CD14-positive monocyte (primary cell): ENCODE measurements at regions of chr12 and their contacts with region 1.

Region 1: DNA sequence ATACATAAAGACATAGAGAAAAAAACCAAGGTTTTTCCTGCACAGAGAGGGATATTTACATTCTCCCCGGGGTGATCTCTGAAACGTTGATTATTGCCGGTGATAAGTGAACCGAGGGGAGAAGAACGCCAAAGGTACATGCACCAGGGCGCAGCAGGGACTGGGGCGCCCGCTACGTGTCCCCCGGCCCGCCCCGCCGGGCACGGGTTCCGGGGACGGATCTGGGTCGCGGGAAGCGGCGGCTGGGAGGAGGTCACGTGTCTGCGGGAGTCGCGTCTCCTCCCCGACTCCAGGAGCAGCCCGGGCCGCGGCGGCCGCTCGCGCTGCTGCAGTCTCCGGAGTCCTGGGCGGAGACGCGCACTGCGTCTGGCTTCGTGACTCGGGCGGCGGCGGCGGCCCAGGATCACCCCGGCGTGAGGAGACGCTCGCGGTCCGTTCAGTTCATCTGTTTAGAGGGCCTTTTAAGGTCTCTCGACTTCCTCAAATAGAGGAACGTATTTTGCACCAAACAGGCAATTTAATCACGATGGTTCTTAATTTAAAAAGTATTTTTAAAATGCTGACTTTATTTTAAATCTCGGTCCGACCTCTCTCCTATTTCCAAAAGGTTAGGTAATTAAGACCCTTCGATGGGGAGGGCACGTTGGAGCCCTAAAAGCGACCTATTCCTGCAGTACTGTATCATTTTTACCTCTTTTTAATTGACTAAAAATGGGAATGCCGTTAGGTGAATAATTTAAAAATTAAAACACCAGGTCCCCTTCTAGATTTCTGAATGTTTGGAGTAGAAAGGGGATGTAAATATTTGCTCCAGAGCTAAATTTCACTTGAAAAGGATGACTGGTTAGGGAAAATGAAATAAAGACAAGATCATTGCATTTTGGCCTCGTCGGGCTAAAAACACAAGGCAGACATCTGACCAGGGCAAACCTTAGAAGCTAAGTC is 1.8 kb upstream of the BHLHE41 start:
- DNase-seq: peak; percentile 52 to 57 (median 53)
- H3K4me3 ChIP-seq: peak overlapping the region; percentile 19 to 75 (median 35)
- H3K4me3 Mint-ChIP-seq: peak overlapping the region; percentile 86 to 97
- H3K27ac ChIP-seq: no peak overlapping the region
- H3K27ac Mint-ChIP-seq: no peak overlapping the region
- H3K4me1 ChIP-seq: peaks cover 49 to 59% of the 10 kb centered on the region in 2 donors
- H3K4me1 Mint-ChIP-seq: peaks cover 51% of the 10 kb centered on the region
- H3K27me3 ChIP-seq: peaks cover 64 to 67% of the 10 kb centered on the region in 2 donors
- H3K27me3 Mint-ChIP-seq: peaks cover 69 to 78% (median 73%) of the 10 kb centered on the region in 3 donors
- CTCF ChIP-seq: no peak

Region 2: GRCh38 chr12:26195641-26196420 is 69.2 kb after region 1 on chr12:
- intact Hi-C with region 1: no loop called
- DNase-seq: peak; percentile 0 to 36 (median 1)
- H3K4me3 ChIP-seq: peak overlapping the region; percentile 14 to 71 (median 31)
- H3K4me3 Mint-ChIP-seq: peak overlapping the region; percentile 84 to 96
- H3K27ac ChIP-seq: no peak overlapping the region
- H3K27ac Mint-ChIP-seq: peak overlapping the region in 1 of 7 donors; percentile 31
- H3K4me1 ChIP-seq: peaks cover 6 to 10% of the 10 kb centered on the region in 2 donors
- H3K4me1 Mint-ChIP-seq: peaks cover 11% of the 10 kb centered on the region
- H3K27me3 ChIP-seq: peaks cover 15 to 20% of the 10 kb centered on the region in 2 donors
- H3K27me3 Mint-ChIP-seq: peaks cover 27 to 31% (median 28%) of the 10 kb centered on the region in 3 donors
- CTCF ChIP-seq: no peak

Region 3: DNA sequence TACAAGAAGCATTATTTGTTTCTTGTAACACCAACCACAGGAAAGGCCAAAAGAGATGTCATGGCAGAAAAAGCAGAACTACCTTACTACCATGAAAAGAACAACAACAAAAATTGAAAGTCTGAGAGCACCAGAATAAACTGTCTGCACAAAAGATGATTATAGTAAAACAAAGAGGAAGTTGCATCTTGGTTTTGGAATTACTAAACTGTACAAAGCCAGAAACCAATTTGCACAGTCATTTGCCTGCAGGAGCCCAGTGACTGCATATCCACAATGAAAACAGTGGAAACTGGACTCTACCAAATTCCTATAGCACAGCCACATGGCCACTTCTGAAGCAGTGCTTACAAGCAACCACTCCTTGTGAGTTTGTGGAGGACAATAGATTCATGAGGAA is 344.9 kb after region 1 on chr12:
- intact Hi-C with region 1: loop called in 1 of 2 experiments (anchors 10 kb)
- DNase-seq: peak; percentile 73 to 88 (median 75)
- H3K4me3 ChIP-seq: peak overlapping the region in 1 of 3 experiments; percentile 29
- H3K4me3 Mint-ChIP-seq: peak overlapping the region in 1 of 2 donors; percentile 49
- H3K27ac ChIP-seq: peak overlapping the region in 1 of 2 donors; percentile 84
- H3K27ac Mint-ChIP-seq: peak overlapping the region; percentile 75 to 95 (median 88)
- H3K4me1 ChIP-seq: peaks cover 36 to 40% of the 10 kb centered on the region in 2 donors
- H3K4me1 Mint-ChIP-seq: peaks cover 47% of the 10 kb centered on the region
- H3K27me3 ChIP-seq: no peaks in the 10 kb centered on the region
- H3K27me3 Mint-ChIP-seq: peaks cover 0 to 1% (median 0%) of the 10 kb centered on the region in 3 donors
- CTCF ChIP-seq: no peak